WTC11 (cell line): ENCODE measurements at regions of chr6 and their contacts with region 1.

Region 1: GRCh38 chr6:31087494-31088089 is 24.8 kb downstream of the C6orf15 start:
- DNase-seq: peak; percentile 91
- ATAC-seq: peak; percentile 86
- H3K4me3 Mint-ChIP-seq: no peak overlapping the region
- H3K27ac Mint-ChIP-seq: peak overlapping the region; percentile 68; the same call in 1 of the 2 replicates
- H3K4me1 Mint-ChIP-seq: peaks cover 13% of the 10 kb centered on the region
- H3K27me3 Mint-ChIP-seq: no peaks in the 10 kb centered on the region
- CTCF ChIP-seq: peak; percentile 82

Region 2: GRCh38 chr6:30730601-30731435 is 356.8 kb before region 1 on chr6:
- CTCF ChIA-PET with region 1: interaction called, 16 read pairs
- POLR2A ChIA-PET with region 1: no interaction called
- DNase-seq: peak; percentile 88
- ATAC-seq: peak; percentile 65
- H3K4me3 Mint-ChIP-seq: no peak overlapping the region
- H3K27ac Mint-ChIP-seq: peak overlapping the region; percentile 36; the same call in 1 of the 2 replicates
- H3K4me1 Mint-ChIP-seq: peaks cover 3% of the 10 kb centered on the region; the same call in 1 of the 2 replicates
- H3K27me3 Mint-ChIP-seq: no peaks in the 10 kb centered on the region
- CTCF ChIP-seq: peak; percentile 19; the same call in 1 of the 2 replicates

Region 3: DNA sequence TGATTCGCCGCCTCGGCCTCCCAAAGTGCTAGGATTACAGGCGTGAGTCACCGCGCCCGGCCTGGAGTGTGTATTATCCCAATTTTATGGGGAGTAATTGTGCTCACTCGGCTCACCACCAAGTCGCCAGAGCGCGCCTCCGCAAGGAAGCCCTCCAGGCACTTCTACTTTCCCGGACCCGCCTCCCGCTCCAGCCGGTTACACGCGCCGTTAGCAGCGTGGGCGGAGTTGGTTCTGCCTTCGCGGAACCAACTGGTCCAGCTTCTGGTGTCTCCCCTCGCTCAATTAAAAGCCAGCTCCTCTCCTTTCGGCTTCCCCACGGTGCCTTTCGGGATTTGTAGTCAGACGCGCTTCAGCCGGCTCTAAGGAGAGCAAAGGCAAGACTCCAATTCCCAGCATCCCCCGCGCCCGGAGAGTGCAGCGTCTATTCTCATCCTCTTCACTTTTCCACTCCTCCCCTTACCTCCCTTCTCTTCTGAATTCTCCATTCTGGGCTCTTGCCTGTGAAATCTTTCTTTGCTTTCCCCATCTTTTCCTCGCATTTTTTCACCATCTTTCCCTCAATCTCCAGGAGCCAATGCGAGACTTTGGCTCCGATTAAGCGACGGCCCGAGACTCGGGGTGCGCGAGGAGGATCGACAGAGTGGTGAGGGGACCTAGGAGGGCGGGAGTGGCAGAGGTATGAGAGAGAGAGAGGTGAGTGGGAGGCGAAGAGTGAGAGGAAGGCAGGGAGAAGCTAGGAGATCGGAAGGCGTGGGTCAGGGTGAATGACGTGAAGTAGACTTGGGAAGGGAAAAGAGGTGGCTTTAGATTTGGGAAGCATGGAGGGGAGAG is 179.6 kb before region 1 on chr6 and contains the start of gene GTF2H4:
- CTCF ChIA-PET with region 1: interaction called, 106 read pairs
- POLR2A ChIA-PET with region 1: no interaction called
- DNase-seq: peak; percentile 96
- ATAC-seq: peak; percentile 98
- H3K4me3 Mint-ChIP-seq: peak within 1 kb of the TSS; percentile 100
- H3K27ac Mint-ChIP-seq: peak within 1 kb of the TSS; percentile 75
- H3K4me1 Mint-ChIP-seq: peaks cover 13% of the 10 kb centered on the region
- H3K27me3 Mint-ChIP-seq: no peaks in the 10 kb centered on the region; the same call in 1 of the 2 replicates
- CTCF ChIP-seq: no peak
- total RNA-seq, gene GTF2H4: 46.2 to 49.7 TPM (median 49.2 TPM) in 3 replicates

Region 4: GRCh38 chr6:30942338-30943060 is 145.1 kb before region 1 on chr6:
- CTCF ChIA-PET with region 1: interaction called, 26 read pairs
- POLR2A ChIA-PET with region 1: no interaction called
- DNase-seq: peak; percentile 98
- ATAC-seq: peak; percentile 93
- H3K4me3 Mint-ChIP-seq: peak overlapping the region; percentile 17; the same call in 1 of the 2 replicates
- H3K27ac Mint-ChIP-seq: peak overlapping the region; percentile 83
- H3K4me1 Mint-ChIP-seq: peaks cover 44% of the 10 kb centered on the region
- H3K27me3 Mint-ChIP-seq: no peaks in the 10 kb centered on the region; the same call in 1 of the 2 replicates
- CTCF ChIP-seq: peak; percentile 36; the same call in 1 of the 2 replicates

Region 5: GRCh38 chr6:31042806-31043205 is 44.8 kb before region 1 on chr6:
- CTCF ChIA-PET with region 1: interaction called, 11 read pairs
- POLR2A ChIA-PET with region 1: no interaction called
- DNase-seq: peak; percentile 72
- ATAC-seq: peak; percentile 94
- H3K4me3 Mint-ChIP-seq: no peak overlapping the region
- H3K27ac Mint-ChIP-seq: no peak overlapping the region
- H3K4me1 Mint-ChIP-seq: no peaks in the 10 kb centered on the region; the same call in 1 of the 2 replicates
- H3K27me3 Mint-ChIP-seq: no peaks in the 10 kb centered on the region
- CTCF ChIP-seq: peak; percentile 54

Region 6: GRCh38 chr6:31103136-31103535 is 15.5 kb after region 1 on chr6:
- CTCF ChIA-PET with region 1: interaction called, 25 read pairs
- POLR2A ChIA-PET with region 1: interaction called, 4 read pairs
- DNase-seq: no peak
- ATAC-seq: no peak
- H3K4me3 Mint-ChIP-seq: no peak overlapping the region
- H3K27ac Mint-ChIP-seq: no peak overlapping the region
- H3K4me1 Mint-ChIP-seq: 0 out of 2 replicates have a peak, but pooled peaks cover 3% of the 10 kb centered on the region
- H3K27me3 Mint-ChIP-seq: no peaks in the 10 kb centered on the region; the same call in 1 of the 2 replicates
- CTCF ChIP-seq: no peak

Region 7: DNA sequence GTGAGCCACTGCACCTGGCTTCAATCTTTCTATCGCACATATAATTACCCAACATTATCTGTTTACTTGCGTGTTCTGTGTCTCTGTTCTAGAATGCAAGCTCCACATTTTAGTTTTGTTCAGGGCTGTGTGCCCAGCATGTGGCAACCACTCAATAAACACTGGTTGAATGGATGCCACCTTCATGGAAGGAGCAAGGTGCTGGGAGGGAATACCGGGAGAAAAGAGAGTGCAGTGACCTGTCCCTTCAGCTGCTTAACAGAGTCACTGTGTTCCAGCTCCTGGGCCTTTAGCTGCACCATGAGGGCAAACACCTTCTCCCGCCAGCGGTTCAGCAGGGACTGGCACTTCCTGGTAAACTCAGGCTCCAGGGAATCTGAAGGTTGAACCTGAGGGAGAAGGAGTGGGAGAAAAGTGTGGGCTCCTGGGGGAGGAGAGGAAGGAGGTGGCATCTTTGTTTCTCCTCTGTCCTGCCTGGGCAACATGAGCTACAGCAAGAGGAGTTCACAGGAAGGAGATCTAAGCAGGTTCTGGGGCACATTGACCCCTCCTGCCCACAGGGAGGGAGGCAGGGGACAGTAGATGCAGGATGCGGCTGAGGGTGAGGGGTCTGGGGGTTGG is 62.3 kb after region 1 on chr6:
- CTCF ChIA-PET with region 1: no interaction called
- POLR2A ChIA-PET with region 1: no interaction called
- DNase-seq: no peak
- ATAC-seq: no peak
- H3K4me3 Mint-ChIP-seq: no peak overlapping the region
- H3K27ac Mint-ChIP-seq: no peak overlapping the region
- H3K4me1 Mint-ChIP-seq: 0 out of 2 replicates have a peak, but pooled peaks cover 10% of the 10 kb centered on the region
- H3K27me3 Mint-ChIP-seq: no peaks in the 10 kb centered on the region
- CTCF ChIP-seq: no peak

Region 8: DNA sequence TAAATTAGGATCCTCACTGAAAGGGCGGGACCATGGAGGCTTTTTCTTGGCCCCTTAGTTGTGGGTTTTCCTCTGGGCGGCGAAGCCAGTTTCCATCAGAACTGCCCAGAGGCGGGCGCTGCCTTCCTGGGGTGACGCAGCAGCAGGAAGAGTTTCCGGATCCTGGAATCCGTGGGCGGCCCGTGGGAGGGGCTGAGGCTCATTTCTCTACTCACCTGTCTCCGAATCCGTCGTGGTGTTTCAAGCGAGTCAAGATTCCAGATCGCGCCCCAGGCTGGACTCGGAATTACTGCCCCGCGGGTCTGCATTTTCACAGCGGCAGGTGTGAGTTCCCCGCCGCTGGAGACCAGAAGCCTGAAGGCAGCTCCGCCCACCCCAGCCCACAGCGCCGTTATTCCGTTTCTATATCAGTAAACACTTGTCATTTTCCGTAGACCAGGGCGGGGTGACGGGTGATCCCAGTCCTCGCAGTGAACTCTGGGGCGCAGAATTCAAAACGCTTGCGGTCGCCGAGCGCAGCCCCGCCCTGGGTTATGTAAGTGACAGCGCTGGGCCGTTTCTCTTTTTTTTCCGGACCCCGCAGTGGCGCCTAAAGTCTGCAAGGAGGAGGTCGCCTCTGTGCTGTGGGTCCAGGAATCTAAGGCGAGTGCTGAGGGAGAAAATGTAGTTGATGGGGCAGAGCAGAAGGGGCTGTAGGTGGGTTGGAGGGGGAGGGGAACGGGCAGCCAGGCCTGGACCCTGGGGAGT is 110.1 kb after region 1 on chr6:
- CTCF ChIA-PET with region 1: interaction called, 10 read pairs
- POLR2A ChIA-PET with region 1: no interaction called
- DNase-seq: peak; percentile 70
- ATAC-seq: peak; percentile 42
- H3K4me3 Mint-ChIP-seq: peak overlapping the region; percentile 83
- H3K27ac Mint-ChIP-seq: no peak overlapping the region
- H3K4me1 Mint-ChIP-seq: peaks cover 6% of the 10 kb centered on the region
- H3K27me3 Mint-ChIP-seq: no peaks in the 10 kb centered on the region; the same call in 1 of the 2 replicates
- CTCF ChIP-seq: no peak